AG04449 (cell line): ENCODE measurements at regions of chr19 and their contacts with region 1.

Region 1: DNA sequence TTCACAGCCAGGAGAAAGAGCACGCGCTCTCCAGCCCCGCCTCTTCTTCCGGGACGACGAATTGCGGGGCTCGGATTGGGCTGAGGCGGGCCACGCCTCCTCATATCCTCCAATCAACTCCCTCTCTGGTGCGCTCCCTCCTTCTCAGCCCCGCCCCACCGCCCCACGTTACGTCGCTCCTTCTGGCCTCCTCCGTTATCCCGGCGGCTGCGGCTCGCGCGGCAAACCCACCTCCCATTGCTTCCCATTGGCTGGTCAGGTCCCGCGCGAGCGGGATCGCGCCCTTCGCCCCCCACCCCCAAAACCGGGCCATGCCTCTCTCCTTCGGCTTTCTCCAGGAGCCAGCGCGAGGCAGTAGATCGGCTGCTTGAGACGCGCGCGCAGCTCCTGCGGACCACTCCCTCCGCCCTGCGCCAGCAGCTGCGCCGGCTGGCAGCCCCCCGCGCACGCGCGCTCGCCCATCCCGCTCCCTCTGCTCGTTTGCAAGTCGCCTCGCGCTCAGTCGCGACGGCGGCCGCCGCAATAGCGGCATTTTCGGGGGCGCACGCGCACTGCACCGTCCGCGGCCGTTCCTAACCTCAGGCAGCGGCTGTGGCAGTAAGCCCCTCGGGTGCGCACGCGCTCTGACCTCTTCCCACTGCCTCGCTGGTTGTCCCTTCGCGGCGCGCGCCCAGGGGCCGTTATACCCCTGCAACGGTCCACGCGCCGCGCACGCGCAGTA is 512 bp upstream of the ARHGAP35 start:
- DNase-seq: peak; percentile 90
- H3K4me3 ChIP-seq: peak overlapping the region; percentile 90
- CTCF ChIP-seq: no peak

Region 2: DNA sequence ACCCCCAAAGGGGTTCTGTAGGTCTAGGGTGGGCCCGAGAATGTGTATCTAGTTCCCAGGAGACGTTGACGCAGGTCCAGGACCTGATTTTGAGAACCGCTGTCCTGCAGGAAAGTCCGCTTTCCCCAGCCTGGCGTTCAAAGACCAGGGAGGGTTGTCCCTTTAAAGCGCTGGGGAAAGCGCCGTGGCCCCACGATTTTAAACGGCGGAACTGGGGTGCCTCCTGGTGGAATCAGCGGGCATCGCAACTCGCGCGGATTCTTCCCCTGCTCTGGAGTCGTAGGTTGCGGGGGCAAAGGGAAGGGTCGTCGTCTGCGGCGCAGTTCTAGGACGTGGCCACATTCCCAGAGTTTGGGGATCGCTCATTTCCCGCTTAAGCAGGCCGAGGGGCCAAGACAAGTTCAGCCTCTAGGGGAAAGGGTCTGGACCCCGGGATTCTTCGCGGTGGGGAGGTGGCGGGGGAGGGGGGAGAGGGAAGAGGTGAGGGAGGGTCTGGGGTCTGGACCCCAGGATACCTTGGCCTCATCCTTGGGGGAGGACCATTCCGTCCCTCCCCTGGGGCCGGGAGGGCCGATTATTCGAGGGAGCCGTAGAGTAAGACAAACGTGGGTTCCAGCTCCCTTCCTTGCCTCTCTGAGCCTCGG is 372.4 kb before region 1 on chr19:
- CTCF ChIA-PET with region 1: no interaction called
- POLR2A ChIA-PET with region 1: no interaction called
- DNase-seq: no peak
- H3K4me3 ChIP-seq: peak overlapping the region; percentile 47
- CTCF ChIP-seq: peak; percentile 95

Region 3: GRCh38 chr19:46813839-46814363 is 46.4 kb before region 1 on chr19:
- CTCF ChIA-PET with region 1: no interaction called
- POLR2A ChIA-PET with region 1: no interaction called
- DNase-seq: no peak
- H3K4me3 ChIP-seq: no peak overlapping the region
- CTCF ChIP-seq: no peak

Region 4: GRCh38 chr19:46975925-46976782 is 115.9 kb after region 1 on chr19:
- CTCF ChIA-PET with region 1: interaction called, 16 read pairs
- POLR2A ChIA-PET with region 1: interaction called, 10 read pairs
- DNase-seq: peak; percentile 96
- H3K4me3 ChIP-seq: no peak overlapping the region
- CTCF ChIP-seq: no peak

Region 5: GRCh38 chr19:46984077-46985010 is 124.1 kb after region 1 on chr19:
- CTCF ChIA-PET with region 1: interaction called, 138 read pairs
- POLR2A ChIA-PET with region 1: interaction called, 3 read pairs
- DNase-seq: no peak
- H3K4me3 ChIP-seq: no peak overlapping the region
- CTCF ChIP-seq: no peak

Region 6: DNA sequence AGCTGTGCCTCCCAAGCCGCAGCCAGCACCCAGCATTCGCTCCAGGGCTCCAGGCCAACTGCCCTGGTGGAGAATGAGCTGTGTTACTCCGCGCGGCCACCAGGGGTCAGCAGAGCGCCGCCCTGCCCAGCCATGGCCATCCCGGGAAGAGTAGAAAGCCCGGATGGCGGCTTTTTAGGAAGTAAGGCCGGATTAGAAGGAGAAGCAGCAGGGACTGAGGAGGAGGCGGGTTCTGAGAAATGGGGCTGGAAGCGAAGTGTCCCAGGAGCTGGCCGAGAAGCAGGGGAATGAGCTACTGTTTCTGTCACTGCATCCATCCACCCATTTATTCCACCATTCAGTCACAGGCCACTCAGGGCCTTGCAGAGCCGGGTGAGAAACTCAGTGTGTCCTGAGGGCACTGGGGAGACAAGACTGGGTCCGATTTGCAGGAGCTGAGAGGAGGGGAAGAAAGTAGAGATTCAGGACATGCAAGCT is 152.8 kb after region 1 on chr19:
- CTCF ChIA-PET with region 1: interaction called, 19 read pairs
- POLR2A ChIA-PET with region 1: no interaction called
- DNase-seq: no peak
- H3K4me3 ChIP-seq: no peak overlapping the region
- CTCF ChIP-seq: peak; percentile 97